ENCODE measurements at regions of chr7 and their contacts with region 1.

Region 1: GRCh38 chr7:116236020-116236630 is 25.8 kb downstream of the TES start:
- DNase-seq: peak; percentile 71
- ATAC-seq: peak; percentile 80
- H3K4me3 ChIP-seq: no peak overlapping the region
- H3K4me3 Mint-ChIP-seq: no peak overlapping the region
- H3K27ac ChIP-seq: no peak overlapping the region
- H3K27ac Mint-ChIP-seq: no peak overlapping the region
- H3K4me1 ChIP-seq: peaks cover 0 to 8% of the 10 kb centered on the region in 2 donors
- H3K4me1 Mint-ChIP-seq: peaks cover 32% of the 10 kb centered on the region
- H3K27me3 ChIP-seq: no peaks in the 10 kb centered on the region
- H3K27me3 Mint-ChIP-seq: no peaks in the 10 kb centered on the region
- CTCF ChIP-seq: peak; percentile 85

Region 2: GRCh38 chr7:116138202-116138801 is 97.8 kb before region 1 on chr7:
- CTCF ChIA-PET with region 1: interaction called, 126 read pairs
- POLR2A ChIA-PET with region 1: no interaction called
- intact Hi-C with region 1: loop called (anchors 1 kb)
- DNase-seq: peak; percentile 74
- ATAC-seq: peak; percentile 85
- H3K4me3 ChIP-seq: no peak overlapping the region
- H3K4me3 Mint-ChIP-seq: no peak overlapping the region
- H3K27ac ChIP-seq: no peak overlapping the region
- H3K27ac Mint-ChIP-seq: no peak overlapping the region
- H3K4me1 ChIP-seq: peaks cover 6 to 7% of the 10 kb centered on the region in 2 donors
- H3K4me1 Mint-ChIP-seq: peaks cover 23% of the 10 kb centered on the region
- H3K27me3 ChIP-seq: no peaks in the 10 kb centered on the region
- H3K27me3 Mint-ChIP-seq: no peaks in the 10 kb centered on the region
- CTCF ChIP-seq: peak; percentile 89

Region 3: DNA sequence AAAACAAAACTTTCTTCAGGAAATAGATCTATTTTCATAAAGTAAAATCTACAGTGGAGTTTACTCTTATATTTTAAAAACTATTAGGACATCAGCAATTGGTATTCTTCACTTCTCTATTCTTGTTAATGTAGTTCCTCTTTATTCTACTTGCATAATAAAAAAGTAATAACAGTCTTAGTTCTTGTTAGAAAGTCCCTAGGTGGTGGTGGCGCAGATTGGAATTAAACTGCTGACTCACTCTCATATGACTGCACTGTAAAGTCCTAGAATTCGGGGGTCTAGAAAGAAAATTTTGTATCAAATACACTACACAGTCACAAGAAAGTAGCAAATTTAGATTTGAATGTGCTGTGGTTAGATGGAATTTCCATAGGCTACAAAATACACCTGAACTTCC is 70.4 kb before region 1 on chr7:
- CTCF ChIA-PET with region 1: interaction called, 108 read pairs
- POLR2A ChIA-PET with region 1: no interaction called
- intact Hi-C with region 1: no loop called
- DNase-seq: peak; percentile 81
- ATAC-seq: peak; percentile 84
- H3K4me3 ChIP-seq: peak overlapping the region in 1 of 5 experiments; percentile 49
- H3K4me3 Mint-ChIP-seq: peak overlapping the region; percentile 71
- H3K27ac ChIP-seq: peak overlapping the region; percentile 27 to 42
- H3K27ac Mint-ChIP-seq: peak overlapping the region; percentile 90
- H3K4me1 ChIP-seq: peaks cover 44 to 45% of the 10 kb centered on the region in 2 donors
- H3K4me1 Mint-ChIP-seq: peaks cover 60% of the 10 kb centered on the region
- H3K27me3 ChIP-seq: no peaks in the 10 kb centered on the region
- H3K27me3 Mint-ChIP-seq: no peaks in the 10 kb centered on the region
- CTCF ChIP-seq: no peak

Region 4: GRCh38 chr7:116211006-116211912 is 24.9 kb before region 1 on chr7:
- CTCF ChIA-PET with region 1: interaction called, 48 read pairs
- POLR2A ChIA-PET with region 1: no interaction called
- intact Hi-C with region 1: loop called (anchors 2 kb)
- DNase-seq: peak; percentile 79
- ATAC-seq: peak; percentile 58
- H3K4me3 ChIP-seq: peak overlapping the region; percentile 70 to 97 (median 85)
- H3K4me3 Mint-ChIP-seq: peak overlapping the region; percentile 99
- H3K27ac ChIP-seq: peak overlapping the region; percentile 82 to 89
- H3K27ac Mint-ChIP-seq: peak overlapping the region; percentile 99
- H3K4me1 ChIP-seq: peaks cover 37 to 40% of the 10 kb centered on the region in 2 donors
- H3K4me1 Mint-ChIP-seq: peaks cover 51% of the 10 kb centered on the region
- H3K27me3 ChIP-seq: no peaks in the 10 kb centered on the region
- H3K27me3 Mint-ChIP-seq: no peaks in the 10 kb centered on the region
- CTCF ChIP-seq: no peak

Region 5: DNA sequence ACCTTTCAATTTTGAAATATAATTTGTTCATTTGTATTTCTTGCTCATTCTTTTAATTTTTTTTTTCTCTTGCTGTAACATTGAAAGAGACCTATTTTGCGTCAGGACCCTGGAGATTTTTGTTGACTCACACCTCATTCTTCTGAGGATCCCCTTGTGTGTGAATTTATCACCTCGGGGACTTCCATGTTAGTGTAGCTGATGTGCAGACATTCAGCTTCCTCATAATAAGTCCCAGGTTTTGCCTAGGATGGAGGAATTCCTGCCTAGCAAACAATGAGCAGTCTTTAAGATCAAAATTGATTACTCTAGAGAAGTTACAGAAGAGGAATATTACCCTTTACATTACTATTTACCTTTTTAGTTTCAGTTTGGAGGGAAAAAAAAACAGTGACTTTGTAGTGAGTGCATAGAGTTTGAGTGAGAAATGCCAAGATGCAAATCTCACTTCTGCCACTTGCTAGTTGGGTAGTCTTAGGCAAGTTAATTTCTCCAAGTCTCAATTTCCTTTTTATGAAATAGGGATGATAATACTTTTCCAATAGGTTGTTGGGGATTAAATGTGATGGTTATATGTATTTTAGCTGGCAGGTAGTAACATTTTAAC is 11.5 kb before region 1 on chr7:
- CTCF ChIA-PET with region 1: interaction called, 41 read pairs
- POLR2A ChIA-PET with region 1: interaction called, 3 read pairs
- intact Hi-C with region 1: loop called (anchors 1 kb)
- DNase-seq: peak; percentile 28
- ATAC-seq: peak; percentile 68
- H3K4me3 ChIP-seq: peak overlapping the region in 1 of 5 experiments; percentile 26
- H3K4me3 Mint-ChIP-seq: peak overlapping the region; percentile 73
- H3K27ac ChIP-seq: no peak overlapping the region
- H3K27ac Mint-ChIP-seq: peak overlapping the region; percentile 71
- H3K4me1 ChIP-seq: peaks cover 32 to 48% of the 10 kb centered on the region in 2 donors
- H3K4me1 Mint-ChIP-seq: peaks cover 74% of the 10 kb centered on the region
- H3K27me3 ChIP-seq: no peaks in the 10 kb centered on the region
- H3K27me3 Mint-ChIP-seq: no peaks in the 10 kb centered on the region
- CTCF ChIP-seq: no peak

Region 6: DNA sequence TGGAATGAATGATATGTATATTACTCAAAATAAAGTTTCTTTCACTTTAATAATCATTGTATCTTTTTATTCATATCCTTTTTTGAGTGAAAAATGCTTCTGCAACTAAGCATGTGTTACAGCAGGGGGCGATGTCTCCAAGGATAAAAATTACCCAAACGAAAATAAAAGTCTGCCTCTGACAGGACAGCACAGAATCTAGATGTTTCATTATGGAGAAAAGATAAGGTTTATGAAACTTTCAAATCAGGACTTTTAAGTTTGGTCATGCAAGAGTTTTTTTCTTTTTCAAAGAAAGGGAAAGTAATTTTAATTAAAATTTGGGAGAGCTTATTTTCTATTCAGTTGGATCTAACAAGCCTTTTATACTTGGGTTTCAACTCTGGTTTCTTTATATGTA is 22.6 kb after region 1 on chr7:
- CTCF ChIA-PET with region 1: interaction called, 28 read pairs
- POLR2A ChIA-PET with region 1: no interaction called
- intact Hi-C with region 1: no loop called
- DNase-seq: peak; percentile 63
- ATAC-seq: peak; percentile 51
- H3K4me3 ChIP-seq: no peak overlapping the region
- H3K4me3 Mint-ChIP-seq: no peak overlapping the region
- H3K27ac ChIP-seq: no peak overlapping the region
- H3K27ac Mint-ChIP-seq: no peak overlapping the region
- H3K4me1 ChIP-seq: no peaks in the 10 kb centered on the region
- H3K4me1 Mint-ChIP-seq: peaks cover 2% of the 10 kb centered on the region
- H3K27me3 ChIP-seq: no peaks in the 10 kb centered on the region
- H3K27me3 Mint-ChIP-seq: no peaks in the 10 kb centered on the region
- CTCF ChIP-seq: peak; percentile 86

Region 7: DNA sequence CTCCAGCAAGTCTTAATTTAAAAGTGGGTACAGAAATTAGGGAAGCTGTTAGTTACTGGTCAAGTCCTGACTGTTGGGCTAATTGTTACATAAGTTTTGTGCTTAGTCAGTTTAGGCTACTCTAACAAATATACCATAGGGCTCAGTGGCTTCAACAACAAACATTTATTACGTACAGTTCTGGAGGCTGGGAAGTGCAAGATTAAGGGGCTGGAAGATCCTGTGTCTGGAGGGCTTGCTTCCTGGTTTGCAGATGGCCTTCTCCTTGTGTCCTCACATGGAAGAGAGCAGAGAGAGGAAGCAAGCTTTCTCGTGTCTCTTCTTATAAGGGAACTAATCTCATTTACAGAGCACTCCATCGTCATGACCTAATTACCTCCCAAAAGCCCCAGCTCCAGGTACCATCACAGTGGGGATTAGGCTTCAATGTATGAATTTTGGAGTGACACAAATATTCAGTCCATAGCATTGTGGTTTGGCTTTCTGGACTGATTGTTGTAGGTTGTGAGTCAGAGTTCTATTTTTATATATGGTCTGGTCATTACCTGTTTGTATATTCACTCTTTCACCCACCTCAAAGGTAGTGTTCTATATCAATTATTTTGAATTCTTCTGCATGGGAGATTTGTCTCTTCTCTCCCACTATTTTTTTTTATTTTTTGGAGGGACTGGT is 734.2 kb after region 1 on chr7:
- CTCF ChIA-PET with region 1: no interaction called
- POLR2A ChIA-PET with region 1: no interaction called
- intact Hi-C with region 1: no loop called
- DNase-seq: no peak
- ATAC-seq: no peak
- H3K4me3 ChIP-seq: no peak overlapping the region
- H3K4me3 Mint-ChIP-seq: no peak overlapping the region
- H3K27ac ChIP-seq: no peak overlapping the region
- H3K27ac Mint-ChIP-seq: no peak overlapping the region
- H3K4me1 ChIP-seq: no peaks in the 10 kb centered on the region
- H3K4me1 Mint-ChIP-seq: no peaks in the 10 kb centered on the region
- H3K27me3 ChIP-seq: no peaks in the 10 kb centered on the region
- H3K27me3 Mint-ChIP-seq: no peaks in the 10 kb centered on the region
- CTCF ChIP-seq: no peak

Measured in B cell (primary cell).